ENCODE measurements at regions of chr2 and their contacts with region 1.

Region 1: GRCh38 chr2:134118279-134119116 is 135.4 kb upstream of the MGAT5 start:
- DNase-seq: peak; percentile 91 to 98 (median 93)
- H3K4me3 ChIP-seq: no peak overlapping the region
- H3K27ac ChIP-seq: peak overlapping the region in 4 of 5 donors; percentile 28 to 95 (median 64)
- H3K4me1 ChIP-seq: peaks cover 0 to 29% of the 10 kb centered on the region in 2 donors
- H3K27me3 ChIP-seq: no peaks in the 10 kb centered on the region
- CTCF ChIP-seq: peak; percentile 60 to 96 (median 89)
- POLR2A ChIP-seq: no peak

Region 2: GRCh38 chr2:133908171-133908570 is 210.3 kb before region 1 on chr2:
- intact Hi-C with region 1: no loop called
- DNase-seq: no peak
- H3K4me3 ChIP-seq: no peak overlapping the region
- H3K27ac ChIP-seq: no peak overlapping the region
- H3K4me1 ChIP-seq: no peaks in the 10 kb centered on the region
- H3K27me3 ChIP-seq: no peaks in the 10 kb centered on the region
- CTCF ChIP-seq: no peak
- POLR2A ChIP-seq: no peak

Region 3: GRCh38 chr2:134154246-134154645 is 35.7 kb after region 1 on chr2:
- intact Hi-C with region 1: no loop called
- DNase-seq: peak in 1 of 7 donors; percentile 18
- H3K4me3 ChIP-seq: no peak overlapping the region
- H3K27ac ChIP-seq: no peak overlapping the region
- H3K4me1 ChIP-seq: peaks cover 0 to 3% of the 10 kb centered on the region in 2 donors
- H3K27me3 ChIP-seq: no peaks in the 10 kb centered on the region
- CTCF ChIP-seq: no peak
- POLR2A ChIP-seq: no peak

Region 4: DNA sequence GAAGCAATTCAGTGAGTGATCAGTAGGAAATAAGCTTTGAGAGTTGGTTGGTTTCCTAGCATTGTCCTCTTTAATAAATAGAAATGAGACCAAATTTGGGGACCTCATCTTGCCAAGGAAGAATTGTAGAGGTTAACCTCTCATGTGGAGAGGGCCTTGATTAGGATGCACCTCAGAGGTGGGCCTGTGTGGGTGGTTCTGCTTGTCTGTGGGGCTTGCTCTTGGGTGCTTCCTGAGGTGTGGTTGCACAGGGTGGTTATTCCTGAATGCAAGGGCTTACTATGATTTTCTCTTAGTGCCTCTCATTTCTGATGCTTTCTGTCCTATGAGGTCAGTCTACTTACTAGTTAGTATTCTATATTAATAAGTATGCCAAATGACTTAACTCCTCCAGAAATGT is 45.8 kb after region 1 on chr2:
- intact Hi-C with region 1: no loop called
- DNase-seq: no peak
- H3K4me3 ChIP-seq: no peak overlapping the region
- H3K27ac ChIP-seq: no peak overlapping the region
- H3K4me1 ChIP-seq: peaks cover 10 to 24% of the 10 kb centered on the region in 2 donors
- H3K27me3 ChIP-seq: no peaks in the 10 kb centered on the region
- CTCF ChIP-seq: no peak
- POLR2A ChIP-seq: no peak

Region 5: GRCh38 chr2:134178241-134178877 is 59.9 kb after region 1 on chr2:
- intact Hi-C with region 1: loop called in 1 of 2 experiments (anchors 10 kb)
- DNase-seq: no peak
- H3K4me3 ChIP-seq: no peak overlapping the region
- H3K27ac ChIP-seq: peak overlapping the region in 2 of 5 donors; percentile 56 to 89
- H3K4me1 ChIP-seq: peaks cover 0 to 26% of the 10 kb centered on the region in 2 donors
- H3K27me3 ChIP-seq: no peaks in the 10 kb centered on the region
- CTCF ChIP-seq: no peak
- POLR2A ChIP-seq: no peak

Region 6: GRCh38 chr2:134207564-134208209 is 89.2 kb after region 1 on chr2:
- intact Hi-C with region 1: loop called (anchors 5 to 10 kb)
- DNase-seq: peak; percentile 49 to 79 (median 61)
- H3K4me3 ChIP-seq: no peak overlapping the region
- H3K27ac ChIP-seq: no peak overlapping the region
- H3K4me1 ChIP-seq: peaks cover 5 to 37% of the 10 kb centered on the region in 2 donors
- H3K27me3 ChIP-seq: no peaks in the 10 kb centered on the region
- CTCF ChIP-seq: peak; percentile 19 to 70 (median 58)
- POLR2A ChIP-seq: no peak

Region 7: GRCh38 chr2:134411828-134412638 is 293.5 kb after region 1 on chr2:
- intact Hi-C with region 1: loop called in 1 of 2 experiments (anchors 5 kb)
- DNase-seq: peak; percentile 63 to 85 (median 67)
- H3K4me3 ChIP-seq: no peak overlapping the region
- H3K27ac ChIP-seq: no peak overlapping the region
- H3K4me1 ChIP-seq: peaks cover 0 to 35% of the 10 kb centered on the region in 2 donors
- H3K27me3 ChIP-seq: no peaks in the 10 kb centered on the region
- CTCF ChIP-seq: peak; percentile 26 to 72 (median 64)
- POLR2A ChIP-seq: no peak